Sciatic nerve (tissue), 2 donors: ENCODE measurements at regions of chr14 and their contacts with region 1.

Region 1: GRCh38 chr14:76352639-76353281 is 23.2 kb upstream of the ESRRB start:
- DNase-seq: peak; percentile 80
- ATAC-seq: peak; percentile 83

Region 2: DNA sequence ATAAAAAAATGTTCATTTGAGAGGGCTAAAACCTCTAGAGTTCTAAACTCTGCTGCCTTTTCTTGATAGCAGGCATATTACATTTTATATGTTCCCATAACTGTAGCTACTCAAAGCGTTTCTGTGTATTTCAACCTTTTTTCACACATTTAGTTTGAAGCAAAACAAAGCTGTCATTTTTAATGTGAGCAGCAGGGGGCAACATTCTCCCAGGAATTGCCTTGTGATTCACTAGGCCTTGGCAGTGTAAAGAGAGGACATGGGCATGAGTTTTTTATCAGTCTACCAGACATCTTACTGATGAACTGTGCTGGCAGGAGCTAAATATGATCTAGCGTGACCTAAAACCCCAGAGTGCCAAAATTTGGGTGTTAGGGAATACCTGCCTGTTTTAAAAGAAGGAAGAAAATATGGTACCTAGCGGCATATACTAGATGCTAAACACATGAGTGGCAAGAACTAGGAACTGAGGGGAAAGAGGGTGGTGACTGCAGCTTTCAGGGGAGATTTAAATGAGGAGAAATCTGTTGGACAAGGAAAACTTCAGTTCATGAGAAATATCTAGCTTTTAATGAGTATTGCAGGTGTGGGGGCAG is 301.9 kb before region 1 on chr14:
- intact Hi-C with region 1: loop called (anchors 5 kb)
- DNase-seq: peak; percentile 67
- ATAC-seq: peak; percentile 55

Region 3: DNA sequence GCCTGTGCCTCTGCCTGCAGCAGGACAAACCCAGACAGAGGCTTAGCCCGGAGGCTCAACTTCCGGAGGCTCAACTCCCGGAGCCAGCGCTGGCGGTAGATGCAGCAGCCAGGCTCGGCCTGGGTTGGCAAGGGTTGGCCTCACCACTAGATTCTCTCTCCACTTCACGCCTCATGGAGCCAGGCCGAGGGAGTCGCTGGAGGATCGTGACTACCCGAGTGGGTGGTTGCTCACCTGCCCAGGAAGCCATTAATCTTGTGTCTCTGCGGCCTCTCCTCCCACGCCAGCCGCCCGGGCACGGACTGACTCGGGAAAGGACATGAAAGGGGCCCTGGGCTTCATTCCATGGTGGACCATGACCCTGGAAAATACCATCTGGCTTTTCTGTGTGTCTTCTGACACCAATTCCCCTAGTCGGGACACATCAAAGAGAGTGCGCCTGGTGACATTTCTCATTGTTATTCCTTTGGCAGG is 44.0 kb after region 1 on chr14:
- intact Hi-C with region 1: loop called (anchors 2 kb)
- DNase-seq: no peak
- ATAC-seq: no peak